ENCODE measurements at regions of chr5 and their contacts with region 1.

Region 1: DNA sequence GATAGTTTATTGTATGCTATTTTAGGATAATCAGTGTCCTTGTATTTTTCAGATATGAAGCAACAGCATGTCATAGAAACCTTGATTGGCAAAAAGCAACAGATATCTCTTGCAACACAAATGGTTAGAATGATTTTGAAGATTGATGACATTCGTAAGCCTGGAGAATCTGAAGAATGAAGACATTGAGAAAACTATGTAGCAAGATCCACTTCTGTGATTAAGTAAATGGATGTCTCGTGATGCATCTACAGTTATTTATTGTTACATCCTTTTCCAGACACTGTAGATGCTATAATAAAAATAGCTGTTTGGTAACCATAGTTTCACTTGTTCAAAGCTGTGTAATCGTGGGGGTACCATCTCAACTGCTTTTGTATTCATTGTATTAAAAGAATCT is 14.5 kb downstream of the CCT5 start:
- DNase-seq: no peak
- ATAC-seq: no peak
- H3K4me3 ChIP-seq: no peak overlapping the region
- H3K27ac ChIP-seq: no peak overlapping the region
- H3K4me1 ChIP-seq: no peaks in the 10 kb centered on the region
- H3K27me3 ChIP-seq: no peaks in the 10 kb centered on the region

Region 2: DNA sequence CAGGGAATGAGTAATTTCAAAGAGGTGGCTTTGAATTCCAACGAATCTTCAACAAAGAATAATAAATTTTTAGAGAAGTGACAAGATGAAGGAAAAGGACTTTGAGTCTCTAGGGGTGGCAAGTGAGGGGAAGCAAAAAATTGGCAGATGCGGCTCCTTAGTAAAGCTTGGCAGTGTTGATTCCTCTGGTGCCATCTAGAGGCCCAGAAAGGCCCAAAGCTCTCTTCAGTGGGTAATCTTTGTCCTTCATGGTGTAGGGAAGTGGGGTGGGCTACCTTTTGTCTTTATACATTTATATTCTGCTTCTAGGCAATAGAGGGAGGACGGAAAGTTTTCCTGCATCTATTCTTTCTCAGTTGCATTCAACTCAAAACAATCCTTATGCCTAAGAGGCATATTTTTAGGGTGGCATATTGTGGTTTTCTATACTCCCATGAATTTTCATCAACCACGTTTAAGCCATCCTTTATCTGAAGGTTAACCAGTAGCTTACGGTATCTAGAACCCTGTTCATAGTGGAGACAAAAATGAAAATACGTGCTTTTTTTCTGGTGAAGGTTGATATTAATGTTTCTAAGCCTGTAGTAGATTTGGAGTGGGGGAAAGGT is 159.6 kb after region 1 on chr5:
- intact Hi-C with region 1: loop called in 1 of 2 experiments (anchors 5 kb)
- DNase-seq: no peak
- ATAC-seq: no peak
- H3K4me3 ChIP-seq: no peak overlapping the region
- H3K27ac ChIP-seq: no peak overlapping the region
- H3K4me1 ChIP-seq: peaks cover 0 to 3% of the 10 kb centered on the region in 2 donors
- H3K27me3 ChIP-seq: no peaks in the 10 kb centered on the region

Measured in aorta (tissue), 5 donors.